ENCODE measurements at regions of chr6 and their contacts with region 1.

Region 1: DNA sequence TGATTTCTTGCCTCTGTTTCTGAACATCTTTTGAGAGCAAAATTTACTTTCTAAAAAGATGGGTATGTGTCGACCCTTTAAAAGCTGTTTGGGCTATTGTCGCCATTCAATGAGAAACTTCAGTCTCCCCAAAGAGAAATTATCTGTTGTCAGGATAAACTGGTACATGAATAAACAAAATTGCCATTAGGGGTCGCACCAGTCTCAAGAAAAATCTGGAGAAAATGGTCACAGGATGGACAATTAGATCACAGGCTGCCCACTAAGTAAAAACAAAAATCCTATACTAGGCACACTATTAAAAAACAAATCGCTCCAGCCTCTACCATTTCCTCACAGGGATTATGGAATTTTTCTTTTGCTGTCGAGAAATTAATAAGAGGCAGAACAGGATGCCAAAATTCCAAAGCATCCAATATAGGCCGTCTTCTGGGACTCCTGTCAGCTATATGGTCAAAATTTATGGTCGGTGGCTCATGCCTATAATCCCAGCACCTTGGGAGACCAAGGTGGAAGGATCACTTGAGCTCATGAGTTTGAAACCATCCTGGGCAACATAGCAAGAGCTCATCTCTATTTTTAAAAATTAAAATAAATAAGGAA is 5.5 kb upstream of the HLA-E start:
- DNase-seq: peak in 5 of 14 experiments; percentile 17 to 78 (median 68)
- ATAC-seq: no peak
- H3K4me3 ChIP-seq: no peak overlapping the region
- H3K4me3 Mint-ChIP-seq: no peak overlapping the region
- H3K27ac ChIP-seq: no peak overlapping the region
- H3K27ac Mint-ChIP-seq: no peak overlapping the region
- H3K4me1 ChIP-seq: peaks cover 36% of the 10 kb centered on the region
- H3K4me1 Mint-ChIP-seq: peaks cover 44% of the 10 kb centered on the region
- H3K27me3 ChIP-seq: peaks cover 18 to 28% of the 10 kb centered on the region in 2 experiments
- H3K27me3 Mint-ChIP-seq: peaks cover 42% of the 10 kb centered on the region
- CTCF ChIP-seq: peak; percentile 94

Region 2: DNA sequence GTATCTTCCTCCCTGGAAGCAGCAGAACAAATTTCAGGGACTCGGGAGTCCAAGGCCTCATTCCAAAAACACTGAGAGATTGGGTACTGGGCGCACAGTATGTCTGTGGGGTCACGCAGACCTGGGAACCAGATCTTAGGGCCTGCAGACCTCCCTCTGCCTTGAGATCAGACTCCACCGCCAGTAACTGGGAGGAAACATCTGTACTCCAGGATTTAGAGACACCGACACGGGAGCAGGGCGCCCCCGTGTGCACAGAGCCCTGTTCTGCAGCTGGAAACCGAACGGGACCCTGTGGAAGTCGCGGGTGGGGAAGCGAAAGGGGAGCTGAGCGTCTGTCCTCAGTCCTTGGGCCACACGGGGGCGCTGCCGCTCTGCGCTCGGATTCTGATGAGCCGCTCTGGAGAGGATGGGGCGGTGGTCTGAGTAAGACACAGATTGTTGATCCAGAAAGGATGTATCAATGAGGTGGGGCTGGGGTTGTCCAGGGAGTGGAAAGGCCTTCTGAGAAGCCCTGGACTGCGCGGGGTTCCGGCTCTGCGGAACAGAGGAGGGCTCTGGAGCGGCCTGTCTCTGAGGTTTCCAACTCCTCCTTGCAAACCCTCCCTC is 30.2 kb before region 1 on chr6:
- CTCF ChIA-PET with region 1: interaction called, 14 read pairs
- POLR2A ChIA-PET with region 1: interaction called, 4 read pairs
- intact Hi-C with region 1: no loop called
- DNase-seq: peak; percentile 77 to 95 (median 86)
- ATAC-seq: peak; percentile 76
- H3K4me3 ChIP-seq: peak overlapping the region; percentile 22
- H3K4me3 Mint-ChIP-seq: peak overlapping the region; percentile 67
- H3K27ac ChIP-seq: no peak overlapping the region
- H3K27ac Mint-ChIP-seq: no peak overlapping the region
- H3K4me1 ChIP-seq: peaks cover 44% of the 10 kb centered on the region
- H3K4me1 Mint-ChIP-seq: peaks cover 49% of the 10 kb centered on the region
- H3K27me3 ChIP-seq: peaks cover 64 to 78% of the 10 kb centered on the region in 2 experiments
- H3K27me3 Mint-ChIP-seq: peaks cover 91% of the 10 kb centered on the region
- CTCF ChIP-seq: peak; percentile 56

Region 3: DNA sequence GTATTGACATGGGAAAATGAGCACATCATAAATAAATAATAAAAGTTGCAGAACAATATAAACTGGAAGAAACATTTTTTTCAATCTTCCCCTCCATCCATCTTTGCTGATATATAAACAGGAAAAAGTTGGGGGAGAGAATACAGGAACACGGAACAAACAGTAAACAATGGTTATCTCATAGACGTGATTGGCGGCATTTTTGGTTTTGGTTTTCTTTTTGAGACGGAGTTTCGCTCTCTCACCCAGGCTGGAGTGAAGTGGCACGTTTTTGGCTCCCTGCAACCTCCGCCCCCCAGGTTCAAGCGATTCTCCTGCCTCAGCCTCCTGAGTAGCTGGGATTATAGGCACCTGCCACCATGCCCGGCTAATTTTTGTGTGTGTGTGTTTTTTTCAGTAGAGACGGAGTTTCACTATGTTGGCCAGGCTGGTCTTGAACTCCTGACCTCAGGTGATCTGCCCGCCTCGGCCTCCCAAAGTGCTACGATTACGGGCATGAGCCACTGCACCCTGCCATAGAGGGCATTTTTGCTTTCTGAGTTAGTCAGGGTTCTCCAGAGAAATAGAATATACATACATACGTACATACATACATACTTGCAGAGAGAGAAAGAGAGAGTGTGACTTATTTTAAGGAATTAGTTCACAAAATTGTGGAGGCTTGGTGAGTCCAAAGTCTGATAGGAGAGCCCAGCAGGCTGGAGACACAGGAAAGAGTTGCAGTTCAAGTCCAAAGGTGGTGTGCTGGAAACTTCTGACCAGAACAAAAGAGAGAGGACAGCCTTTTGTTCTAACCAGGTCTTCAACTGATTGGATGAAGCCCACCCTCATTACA is 49.9 kb after region 1 on chr6:
- CTCF ChIA-PET with region 1: interaction called, 14 read pairs
- POLR2A ChIA-PET with region 1: interaction called, 8 read pairs
- intact Hi-C with region 1: loop called (anchors 1 to 2 kb)
- DNase-seq: peak in 2 of 14 experiments; percentile 56 to 76
- ATAC-seq: no peak
- H3K4me3 ChIP-seq: peak overlapping the region; percentile 29
- H3K4me3 Mint-ChIP-seq: peak overlapping the region; percentile 90
- H3K27ac ChIP-seq: no peak overlapping the region
- H3K27ac Mint-ChIP-seq: peak overlapping the region; percentile 79
- H3K4me1 ChIP-seq: peaks cover 40% of the 10 kb centered on the region
- H3K4me1 Mint-ChIP-seq: peaks cover 41% of the 10 kb centered on the region
- H3K27me3 ChIP-seq: no peaks in the 10 kb centered on the region
- H3K27me3 Mint-ChIP-seq: no peaks in the 10 kb centered on the region
- CTCF ChIP-seq: no peak

Region 4: DNA sequence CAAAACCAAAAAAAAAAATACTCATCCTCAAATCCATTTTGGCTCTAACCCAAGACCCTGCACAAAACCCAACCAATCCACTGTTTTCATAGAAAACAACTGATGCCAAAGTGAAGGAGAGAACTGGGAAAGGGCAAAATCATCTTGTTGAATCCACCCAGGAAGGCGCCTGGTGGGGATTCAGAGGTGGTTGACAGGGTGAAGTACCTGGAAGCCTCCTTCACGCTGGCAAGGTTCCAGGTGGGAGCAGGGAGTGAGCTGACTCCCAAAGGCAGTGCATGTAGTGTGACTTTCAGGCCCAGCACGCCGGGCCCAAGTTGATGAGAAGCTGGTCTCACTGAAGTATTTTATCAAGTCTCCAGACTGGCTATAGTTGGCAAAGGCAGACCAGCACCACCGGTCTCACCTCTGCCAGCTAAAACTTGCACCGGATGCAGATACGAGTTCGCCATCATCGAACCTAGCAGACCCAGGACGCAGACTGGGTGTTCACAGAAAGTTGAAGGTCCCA is 116.7 kb after region 1 on chr6:
- CTCF ChIA-PET with region 1: interaction called, 42 read pairs
- POLR2A ChIA-PET with region 1: interaction called, 26 read pairs
- intact Hi-C with region 1: loop called (anchors 1 kb)
- DNase-seq: no peak
- ATAC-seq: no peak
- H3K4me3 ChIP-seq: no peak overlapping the region
- H3K4me3 Mint-ChIP-seq: no peak overlapping the region
- H3K27ac ChIP-seq: peak overlapping the region; percentile 29 to 37
- H3K27ac Mint-ChIP-seq: peak overlapping the region; percentile 58
- H3K4me1 ChIP-seq: peaks cover 14% of the 10 kb centered on the region
- H3K4me1 Mint-ChIP-seq: peaks cover 35% of the 10 kb centered on the region
- H3K27me3 ChIP-seq: no peaks in the 10 kb centered on the region
- H3K27me3 Mint-ChIP-seq: no peaks in the 10 kb centered on the region
- CTCF ChIP-seq: no peak

Region 5: DNA sequence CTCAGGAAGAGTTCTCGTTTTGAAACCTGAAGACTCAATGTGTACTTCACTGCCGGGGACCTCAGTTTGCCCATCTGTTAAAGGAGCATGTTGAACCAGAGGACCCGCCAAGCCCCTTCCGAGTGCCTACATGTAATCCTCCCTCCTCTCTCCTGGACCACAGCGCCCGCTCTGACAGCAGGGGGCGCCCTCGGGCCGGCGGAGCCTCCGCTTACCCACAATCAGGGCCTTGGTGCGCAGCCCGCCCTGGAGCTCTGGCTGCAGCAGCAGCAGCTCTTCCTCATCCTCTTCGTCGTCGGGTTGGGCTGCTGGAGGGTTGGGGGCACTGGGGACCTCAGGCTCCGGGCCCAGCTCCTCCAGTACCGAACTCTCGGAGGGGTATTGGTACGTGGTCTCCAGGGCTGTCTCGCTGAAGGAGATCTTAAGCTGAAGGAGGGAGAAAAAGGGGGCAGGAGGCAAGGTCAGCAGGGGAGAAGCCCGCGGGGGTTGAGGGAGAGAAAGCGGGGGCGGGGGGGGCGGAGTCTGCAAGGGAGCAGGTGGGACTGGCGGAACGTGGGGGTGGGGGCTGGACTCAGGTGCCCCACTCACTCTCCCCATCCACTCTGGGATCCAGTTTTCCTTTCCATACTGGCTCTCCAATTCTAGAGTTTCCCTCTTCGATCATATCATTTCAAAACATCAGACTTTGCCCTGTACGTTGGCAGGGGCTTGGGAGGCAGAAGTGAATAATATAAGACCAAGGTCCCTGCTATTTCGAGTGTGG is 195.4 kb after region 1 on chr6:
- CTCF ChIA-PET with region 1: interaction called, 12 read pairs
- POLR2A ChIA-PET with region 1: interaction called, 4 read pairs
- intact Hi-C with region 1: no loop called
- DNase-seq: peak; percentile 84 to 96 (median 94)
- ATAC-seq: peak; percentile 41
- H3K4me3 ChIP-seq: peak overlapping the region; percentile 99
- H3K4me3 Mint-ChIP-seq: peak overlapping the region; percentile 98
- H3K27ac ChIP-seq: peak overlapping the region; percentile 41 to 98
- H3K27ac Mint-ChIP-seq: peak overlapping the region; percentile 94
- H3K4me1 ChIP-seq: peaks cover 49% of the 10 kb centered on the region
- H3K4me1 Mint-ChIP-seq: peaks cover 47% of the 10 kb centered on the region
- H3K27me3 ChIP-seq: no peaks in the 10 kb centered on the region
- H3K27me3 Mint-ChIP-seq: no peaks in the 10 kb centered on the region
- CTCF ChIP-seq: peak; percentile 91

Region 6: GRCh38 chr6:30730601-30731435 is 247.0 kb after region 1 on chr6:
- CTCF ChIA-PET with region 1: interaction called, 5 read pairs
- POLR2A ChIA-PET with region 1: interaction called, 3 read pairs
- intact Hi-C with region 1: loop called in 1 of 2 experiments (anchors 2 kb)
- DNase-seq: peak; percentile 74 to 92 (median 84)
- ATAC-seq: peak; percentile 99
- H3K4me3 ChIP-seq: peak overlapping the region; percentile 25
- H3K4me3 Mint-ChIP-seq: peak overlapping the region; percentile 50
- H3K27ac ChIP-seq: peak overlapping the region in 1 of 2 donors; percentile 14
- H3K27ac Mint-ChIP-seq: peak overlapping the region; percentile 67
- H3K4me1 ChIP-seq: peaks cover 36% of the 10 kb centered on the region
- H3K4me1 Mint-ChIP-seq: peaks cover 46% of the 10 kb centered on the region
- H3K27me3 ChIP-seq: no peaks in the 10 kb centered on the region
- H3K27me3 Mint-ChIP-seq: no peaks in the 10 kb centered on the region
- CTCF ChIP-seq: peak; percentile 84